PC-9 (cell line): ENCODE measurements at regions of chr1 and their contacts with region 1.

Region 1: DNA sequence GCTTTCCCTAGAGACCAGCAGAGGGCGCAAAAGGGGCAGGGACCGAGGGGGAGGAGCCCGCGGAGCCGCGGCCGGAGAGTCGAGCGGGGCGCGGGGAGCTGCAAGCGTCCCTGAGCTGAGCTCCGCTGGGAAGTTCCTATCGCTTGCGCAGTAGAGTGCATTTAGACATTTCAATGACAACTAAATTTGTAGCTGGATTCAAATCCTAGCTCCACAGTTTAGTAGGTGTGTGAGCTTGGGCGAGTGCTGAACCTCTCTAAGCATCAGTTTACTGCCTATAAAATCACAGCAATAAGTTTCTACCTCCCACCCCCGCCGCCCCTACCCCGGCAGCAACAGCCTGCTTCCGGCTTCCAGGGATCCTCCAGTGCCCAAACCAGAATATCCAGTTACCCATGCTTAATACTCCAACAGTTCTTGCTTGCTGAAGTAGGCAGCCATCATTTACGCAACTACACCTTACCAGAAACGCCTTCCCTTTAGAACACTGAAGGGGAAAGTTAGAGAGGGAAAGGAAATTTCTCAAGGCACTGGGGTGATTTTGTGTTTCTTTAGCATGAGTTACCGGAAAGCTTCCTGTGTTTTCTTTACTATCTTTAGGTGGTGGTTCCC is 9.1 kb downstream of the TLR5 start:
- DNase-seq: peak; percentile 91 to 92
- H3K4me3 ChIP-seq: peak overlapping the region; percentile 51; the same call in 1 of the 2 replicates
- H3K27ac ChIP-seq: peak overlapping the region; percentile 73
- H3K4me1 ChIP-seq: peaks cover 33% of the 10 kb centered on the region
- H3K27me3 ChIP-seq: no peaks in the 10 kb centered on the region
- CTCF ChIP-seq: peak; percentile 96

Region 2: DNA sequence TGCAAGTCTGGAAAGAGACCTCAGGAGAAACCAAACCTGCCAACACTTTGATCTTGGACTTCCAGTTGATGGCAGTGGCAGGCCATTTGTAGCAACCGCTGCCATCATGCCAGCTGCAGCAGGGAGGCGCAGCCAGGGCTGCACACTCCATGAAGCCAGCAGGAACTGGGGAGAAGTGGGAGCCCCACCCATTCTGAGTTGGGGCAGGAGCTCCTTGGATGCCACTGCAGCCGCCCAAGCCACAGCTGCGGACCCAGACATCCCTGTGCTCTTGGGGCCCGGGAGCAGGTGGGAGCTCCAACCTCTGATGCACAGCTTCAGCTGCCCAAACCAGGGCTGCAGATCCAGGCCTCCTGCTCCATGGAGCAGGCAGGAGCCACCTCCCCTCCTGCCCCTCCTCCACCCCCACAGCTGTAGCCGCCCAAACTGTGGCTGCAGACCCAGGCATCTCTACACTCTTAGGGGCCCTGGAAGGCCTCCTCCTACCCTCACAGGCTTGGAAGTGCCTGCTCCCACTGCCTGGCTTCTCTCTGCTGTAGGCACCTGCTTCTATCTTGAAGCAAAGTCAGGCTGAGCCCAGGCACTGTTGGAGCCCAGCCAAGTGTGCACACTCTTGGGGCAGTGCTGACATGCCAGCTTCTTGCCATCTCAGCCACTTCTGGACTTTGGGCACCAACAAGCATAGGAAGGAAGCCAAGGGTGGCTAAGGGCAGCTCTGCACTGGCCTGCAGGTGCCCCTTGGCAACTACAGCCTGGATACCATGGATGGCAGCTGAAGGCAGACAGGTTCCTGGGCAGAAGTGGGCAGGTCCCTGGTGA is 339.1 kb before region 1 on chr1:
- CTCF ChIA-PET with region 1: no interaction called
- POLR2A ChIA-PET with region 1: no interaction called
- intact Hi-C with region 1: no loop called
- DNase-seq: peak in 1 of 2 experiments; percentile 43
- H3K4me3 ChIP-seq: no peak overlapping the region
- H3K27ac ChIP-seq: no peak overlapping the region
- H3K4me1 ChIP-seq: peaks cover 14% of the 10 kb centered on the region
- H3K27me3 ChIP-seq: peaks cover 7% of the 10 kb centered on the region; the same call in 1 of the 2 replicates
- CTCF ChIP-seq: 0 out of 2 replicates have a peak, but pooled peaks have one; percentile 22

Region 3: GRCh38 chr1:223081181-223081994 is 52.5 kb before region 1 on chr1:
- CTCF ChIA-PET with region 1: interaction called, 3 read pairs
- POLR2A ChIA-PET with region 1: no interaction called
- intact Hi-C with region 1: loop called (anchors 2 kb)
- DNase-seq: peak; percentile 95 to 97
- H3K4me3 ChIP-seq: peak overlapping the region; percentile 27; the same call in 1 of the 2 replicates
- H3K27ac ChIP-seq: no peak overlapping the region
- H3K4me1 ChIP-seq: no peaks in the 10 kb centered on the region
- H3K27me3 ChIP-seq: peaks cover 13% of the 10 kb centered on the region
- CTCF ChIP-seq: peak; percentile 93

Region 4: DNA sequence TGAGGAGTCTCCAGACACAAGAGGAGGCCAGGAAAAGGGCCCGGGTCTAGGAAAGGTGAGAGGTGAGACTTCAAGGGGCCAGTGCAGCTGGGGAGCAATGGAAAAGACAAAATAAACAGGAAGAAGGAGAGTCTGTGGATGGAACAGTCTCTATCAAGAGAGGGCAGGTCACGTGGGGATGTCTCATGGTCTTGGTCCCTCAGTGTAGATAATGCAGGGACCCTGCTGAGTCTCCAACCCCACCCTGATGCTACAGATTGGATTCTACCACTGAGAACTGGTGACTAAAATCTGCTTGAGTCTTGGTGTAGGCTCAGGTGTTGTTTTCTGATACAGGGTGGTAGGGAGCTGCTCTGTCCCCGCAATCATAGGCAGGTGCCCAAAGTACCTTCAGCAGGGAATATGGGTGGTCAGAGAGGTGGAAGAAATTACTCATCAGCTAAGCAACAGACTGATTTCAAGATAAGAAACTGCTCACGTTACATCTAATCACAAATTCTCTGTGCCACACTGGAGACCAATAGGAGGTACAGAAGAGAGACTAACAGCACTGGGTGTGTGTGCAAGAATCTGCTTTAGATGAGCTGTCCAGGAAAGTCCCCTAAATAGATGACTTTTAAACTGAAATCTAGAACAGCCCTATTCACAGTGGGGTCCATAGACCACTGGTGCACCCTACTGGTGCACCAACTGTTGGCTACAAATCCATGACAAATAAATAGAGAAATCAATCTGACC is 110.6 kb after region 1 on chr1:
- CTCF ChIA-PET with region 1: interaction called, 4 read pairs
- POLR2A ChIA-PET with region 1: no interaction called
- intact Hi-C with region 1: loop called (anchors 1 kb)
- DNase-seq: peak; percentile 23 to 48
- H3K4me3 ChIP-seq: no peak overlapping the region
- H3K27ac ChIP-seq: no peak overlapping the region
- H3K4me1 ChIP-seq: peaks cover 10% of the 10 kb centered on the region; the same call in 1 of the 2 replicates
- H3K27me3 ChIP-seq: no peaks in the 10 kb centered on the region
- CTCF ChIP-seq: peak; percentile 44

Region 5: DNA sequence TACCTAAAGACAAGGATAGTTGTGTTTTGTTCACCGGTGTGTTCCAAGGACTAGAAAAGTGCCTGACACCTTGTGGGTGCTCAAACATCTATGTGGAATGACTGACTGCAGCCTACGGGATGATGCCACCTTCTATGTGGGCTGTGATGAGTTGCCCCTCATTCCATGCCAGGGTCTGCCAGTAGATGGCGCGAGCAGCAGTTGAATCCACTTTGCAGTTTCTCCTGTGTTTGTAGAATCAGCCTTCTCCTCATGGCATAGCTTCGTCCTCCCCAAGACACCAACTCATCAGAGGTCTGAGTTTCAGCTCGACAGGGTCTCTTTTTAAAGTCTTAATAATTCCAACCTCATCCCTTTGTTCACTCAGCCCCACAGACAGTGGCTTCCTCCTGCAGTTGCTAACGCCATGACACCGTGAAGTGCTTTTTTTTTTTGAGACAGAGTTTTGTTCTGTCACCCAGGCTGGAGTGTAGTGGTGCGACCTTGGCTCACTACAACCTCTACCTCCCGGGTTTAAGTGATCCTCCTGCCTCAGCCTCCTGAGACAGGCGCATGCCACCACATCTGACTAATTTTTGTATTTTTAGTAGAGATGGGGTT is 397.9 kb after region 1 on chr1:
- CTCF ChIA-PET with region 1: no interaction called
- POLR2A ChIA-PET with region 1: no interaction called
- intact Hi-C with region 1: loop called (anchors 1 kb)
- DNase-seq: peak; percentile 46 to 68
- H3K4me3 ChIP-seq: no peak overlapping the region
- H3K27ac ChIP-seq: no peak overlapping the region
- H3K4me1 ChIP-seq: no peaks in the 10 kb centered on the region
- H3K27me3 ChIP-seq: no peaks in the 10 kb centered on the region
- CTCF ChIP-seq: peak; percentile 74

Region 6: DNA sequence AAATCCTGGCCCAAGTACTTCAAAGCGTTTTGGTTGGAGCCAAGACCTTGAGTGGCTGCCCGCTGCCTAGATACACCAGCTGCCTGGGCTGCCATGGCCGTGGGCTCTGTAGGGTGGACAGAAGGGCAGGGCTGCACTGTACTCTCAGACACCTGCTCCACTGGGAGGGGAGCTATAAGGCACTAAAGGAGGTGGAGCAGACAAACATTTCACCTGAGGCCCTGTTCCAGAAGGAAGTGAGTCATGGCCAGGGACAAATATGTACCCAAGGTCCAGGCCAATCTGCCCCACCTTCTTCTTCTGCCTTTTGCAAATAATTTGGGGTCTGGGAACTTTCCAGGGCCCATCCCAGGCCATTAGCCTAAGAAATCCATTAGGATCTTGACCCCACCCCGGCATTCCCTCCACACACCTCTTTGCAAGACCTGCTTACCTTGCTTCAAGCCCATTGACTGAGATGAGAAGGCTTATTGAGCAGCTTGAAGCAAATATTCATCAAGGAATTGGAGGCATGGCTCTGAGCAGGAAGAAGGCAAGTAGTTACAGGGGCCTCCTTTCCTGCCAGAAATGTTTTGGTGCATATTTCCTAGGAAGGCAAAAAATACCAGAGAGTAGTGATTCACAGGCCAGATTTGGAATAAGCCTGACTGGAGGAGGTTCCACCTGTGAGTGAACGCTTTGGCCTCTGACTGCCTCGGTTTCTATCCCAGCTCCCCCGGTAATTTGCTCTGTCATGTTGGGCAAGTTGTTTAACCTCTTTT is 531.8 kb after region 1 on chr1 and contains the start of gene CAPN8:
- CTCF ChIA-PET with region 1: interaction called, 3 read pairs
- POLR2A ChIA-PET with region 1: no interaction called
- intact Hi-C with region 1: loop called (anchors 5 kb)
- DNase-seq: peak; percentile 88 to 97
- H3K4me3 ChIP-seq: peak within 1 kb of the TSS; percentile 54
- H3K27ac ChIP-seq: peak within 1 kb of the TSS; percentile 98
- H3K4me1 ChIP-seq: peaks cover 96% of the 10 kb centered on the region
- H3K27me3 ChIP-seq: no peaks in the 10 kb centered on the region
- CTCF ChIP-seq: no peak
- total RNA-seq, gene CAPN8: 85.6 and 94.7 TPM in 2 replicates